Activated CD8-positive, alpha-beta memory T cell treated with anti-CD3 and anti-CD28 coated beads, Interleukin-2, amount 10 ng/mL, durations not matched to agents 7 days and 5 days (primary cell): ENCODE measurements at regions of chr17 and their contacts with region 1.

Region 1: DNA sequence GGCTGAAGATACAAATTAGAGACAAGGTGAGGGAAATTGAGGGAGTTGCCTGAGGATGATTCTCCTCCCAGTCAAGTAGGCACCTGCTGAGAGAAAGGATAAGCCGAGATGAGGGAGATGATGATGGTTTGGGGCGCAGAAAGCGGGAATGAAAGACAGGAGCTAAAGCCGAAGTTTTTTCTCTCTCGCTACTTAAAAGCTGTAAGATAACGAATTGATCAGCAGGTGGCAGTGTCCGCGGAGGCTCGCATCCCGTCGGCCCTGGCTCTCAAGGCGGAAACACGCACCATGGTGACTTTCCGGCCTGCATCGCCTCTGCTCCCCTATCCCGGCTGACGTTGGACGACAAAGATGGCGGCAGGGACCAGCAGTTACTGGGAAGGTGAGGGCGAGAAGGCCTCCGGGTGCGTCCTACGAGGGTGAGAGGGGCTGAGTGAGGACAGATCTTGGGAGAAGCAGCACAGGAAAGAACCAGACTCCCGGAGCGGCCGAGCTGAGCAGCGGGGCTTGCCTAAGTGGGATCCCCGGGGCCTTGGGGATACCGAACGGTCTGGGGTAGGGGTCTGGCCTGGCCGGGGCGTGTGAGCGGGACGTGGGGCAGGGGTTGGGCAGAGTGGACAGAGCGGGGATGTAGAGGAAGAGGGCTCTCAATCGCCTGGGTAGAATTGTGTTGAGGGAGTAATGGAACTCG is at the start of gene GOSR1:
- DNase-seq: peak; percentile 96
- ATAC-seq: peak; percentile 100
- H3K4me3 Mint-ChIP-seq: peak within 1 kb of the TSS; percentile 94
- H3K27ac Mint-ChIP-seq: peak within 1 kb of the TSS; percentile 96
- H3K4me1 Mint-ChIP-seq: peaks cover 38% of the 10 kb centered on the region
- H3K27me3 Mint-ChIP-seq: no peaks in the 10 kb centered on the region
- total RNA-seq, gene GOSR1: 45.3 to 49.3 TPM

Region 2: DNA sequence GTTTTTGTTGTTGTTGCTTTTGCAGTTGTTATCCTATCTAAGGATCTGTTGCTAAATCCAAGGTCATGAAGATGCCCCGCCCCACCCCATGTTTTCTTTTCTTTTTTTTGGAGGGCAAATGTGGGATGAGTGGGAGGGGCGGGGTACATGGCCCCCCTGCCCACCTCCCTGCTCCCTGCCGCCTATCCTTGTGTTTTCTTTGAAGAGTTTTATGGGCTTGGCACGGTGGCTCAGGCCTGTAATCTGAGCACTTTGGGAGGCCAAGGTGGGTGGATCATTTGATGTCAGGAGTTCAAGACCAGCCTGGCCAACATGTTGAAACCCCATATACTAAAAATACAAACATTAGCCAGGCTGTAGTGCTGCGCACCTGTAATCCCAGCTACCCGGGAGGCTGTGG is 18.9 kb before region 1 on chr17:
- CTCF ChIA-PET with region 1: no interaction called
- DNase-seq: no peak
- ATAC-seq: no peak
- H3K4me3 Mint-ChIP-seq: no peak overlapping the region
- H3K27ac Mint-ChIP-seq: no peak overlapping the region
- H3K4me1 Mint-ChIP-seq: no peaks in the 10 kb centered on the region
- H3K27me3 Mint-ChIP-seq: no peaks in the 10 kb centered on the region

Region 3: GRCh38 chr17:30701498-30701989 is 224.3 kb after region 1 on chr17:
- CTCF ChIA-PET with region 1: interaction called, 10 read pairs
- DNase-seq: no peak
- ATAC-seq: no peak
- H3K4me3 Mint-ChIP-seq: no peak overlapping the region
- H3K27ac Mint-ChIP-seq: no peak overlapping the region
- H3K4me1 Mint-ChIP-seq: peaks cover 8% of the 10 kb centered on the region
- H3K27me3 Mint-ChIP-seq: peaks cover 46% of the 10 kb centered on the region

Region 4: GRCh38 chr17:30716461-30717300 is 239.5 kb after region 1 on chr17:
- CTCF ChIA-PET with region 1: interaction called, 12 read pairs
- DNase-seq: no peak
- ATAC-seq: no peak
- H3K4me3 Mint-ChIP-seq: no peak overlapping the region
- H3K27ac Mint-ChIP-seq: no peak overlapping the region
- H3K4me1 Mint-ChIP-seq: peaks cover 11% of the 10 kb centered on the region
- H3K27me3 Mint-ChIP-seq: peaks cover 5% of the 10 kb centered on the region